Gastrocnemius medialis (tissue), 4 donors: ENCODE measurements at regions of chr16 and their contacts with region 1.

Region 1: GRCh38 chr16:69796351-69797118 is 34.4 kb downstream of the WWP2 start:
- DNase-seq: peak; percentile 13 to 18
- ATAC-seq: peak; percentile 80 to 95
- H3K4me3 ChIP-seq: peak overlapping the region in 1 of 4 donors; percentile 10
- H3K27ac ChIP-seq: no peak overlapping the region
- H3K4me1 ChIP-seq: peaks cover 0 to 4% of the 10 kb centered on the region in 2 donors
- H3K27me3 ChIP-seq: no peaks in the 10 kb centered on the region
- CTCF ChIP-seq: peak; percentile 82 to 91 (median 89)
- POLR2A ChIP-seq: no peak

Region 2: GRCh38 chr16:69848637-69849545 is 52.4 kb after region 1 on chr16:
- in situ Hi-C with region 1: loop called in 2 of 4 experiments (anchors 10 kb)
- intact Hi-C with region 1: no loop called
- DNase-seq: peak; percentile 69 to 82
- ATAC-seq: peak; percentile 97 to 98
- H3K4me3 ChIP-seq: peak overlapping the region; percentile 3 to 31 (median 16)
- H3K27ac ChIP-seq: peak overlapping the region; percentile 68 to 82 (median 76)
- H3K4me1 ChIP-seq: peaks cover 21 to 25% of the 10 kb centered on the region in 2 donors
- H3K27me3 ChIP-seq: no peaks in the 10 kb centered on the region
- CTCF ChIP-seq: no peak
- POLR2A ChIP-seq: no peak

Region 3: DNA sequence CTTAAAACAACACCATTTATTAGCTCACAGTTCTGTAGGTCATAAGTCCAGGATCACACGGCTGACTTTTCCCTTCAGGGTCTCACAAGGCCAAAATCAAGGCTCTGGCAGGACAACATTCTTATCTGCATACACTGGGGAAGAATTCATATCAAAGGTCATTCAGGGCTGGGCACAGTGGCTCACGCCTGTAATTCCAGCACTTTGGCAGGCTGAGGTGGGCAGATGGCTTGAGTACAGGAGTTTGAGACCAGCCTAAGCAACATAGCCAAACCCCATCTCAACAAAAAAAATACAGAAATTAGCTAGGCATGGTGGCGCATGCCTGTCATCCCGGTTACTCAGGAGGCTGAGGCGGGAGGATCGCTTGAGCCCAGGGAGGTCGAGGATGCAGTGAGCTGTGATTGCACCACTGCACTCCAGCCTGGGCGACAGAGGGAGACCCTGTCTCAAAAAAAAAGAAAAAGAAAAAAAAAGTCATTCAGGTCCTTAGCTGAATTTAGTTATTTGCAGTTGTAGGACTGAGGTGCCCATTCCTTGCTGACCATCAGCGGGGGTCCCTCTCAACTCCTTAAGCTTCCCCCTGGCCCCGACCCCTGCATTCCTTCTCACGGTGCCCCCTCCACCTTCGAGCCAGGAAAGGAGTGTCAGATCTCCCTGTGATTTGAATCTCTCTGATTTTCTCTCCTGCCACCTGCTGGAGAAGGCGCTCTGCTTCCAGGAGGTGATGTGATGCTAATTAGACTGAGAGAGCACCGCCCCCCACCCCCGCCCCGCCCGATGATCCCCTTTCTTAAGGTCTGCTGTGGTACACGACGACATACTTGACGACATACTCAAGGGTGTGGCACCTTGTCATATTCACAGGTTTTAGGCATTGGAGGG is 62.8 kb after region 1 on chr16:
- in situ Hi-C with region 1: loop called in 1 of 4 experiments (anchors 10 kb)
- intact Hi-C with region 1: loop called (anchors 1 kb)
- DNase-seq: peak in 1 of 2 donors; percentile 23
- ATAC-seq: peak in 1 of 2 donors; percentile 20
- H3K4me3 ChIP-seq: no peak overlapping the region
- H3K27ac ChIP-seq: peak overlapping the region; percentile 80 to 84 (median 82)
- H3K4me1 ChIP-seq: peaks cover 22 to 32% of the 10 kb centered on the region in 2 donors
- H3K27me3 ChIP-seq: no peaks in the 10 kb centered on the region
- CTCF ChIP-seq: peak in 4 of 5 experiments; percentile 20 to 57 (median 41)
- POLR2A ChIP-seq: no peak

Region 4: DNA sequence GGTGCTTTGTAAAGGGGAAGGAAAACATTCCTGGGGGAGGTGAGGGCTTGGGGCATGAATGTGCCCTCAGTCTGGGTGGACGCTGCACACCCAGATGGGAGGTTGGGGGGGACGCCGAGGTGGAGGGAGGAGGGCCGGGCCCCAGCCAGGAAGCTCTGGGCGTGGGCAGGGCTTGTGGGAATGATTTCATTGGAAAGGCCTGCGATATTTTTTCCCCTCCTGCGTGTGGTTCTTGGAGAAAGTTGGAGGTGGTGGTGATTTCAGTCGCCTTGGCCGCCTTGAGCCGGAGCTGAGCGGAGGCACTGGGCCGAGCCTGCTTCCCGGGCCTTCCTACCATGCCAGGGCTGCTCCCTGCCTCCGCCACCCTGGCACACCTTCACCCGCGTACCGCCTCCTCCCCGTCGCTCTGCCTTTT is 128.2 kb after region 1 on chr16:
- in situ Hi-C with region 1: loop called in 1 of 4 experiments (anchors 5 kb)
- intact Hi-C with region 1: no loop called
- DNase-seq: peak in 1 of 2 donors; percentile 58
- ATAC-seq: peak in 1 of 2 donors; percentile 65
- H3K4me3 ChIP-seq: peak overlapping the region; percentile 23 to 41 (median 34)
- H3K27ac ChIP-seq: peak overlapping the region; percentile 70 to 82 (median 72)
- H3K4me1 ChIP-seq: peaks cover 15 to 27% of the 10 kb centered on the region in 2 donors
- H3K27me3 ChIP-seq: no peaks in the 10 kb centered on the region
- CTCF ChIP-seq: no peak
- POLR2A ChIP-seq: peak in 1 of 2 donors; percentile 47

Region 5: DNA sequence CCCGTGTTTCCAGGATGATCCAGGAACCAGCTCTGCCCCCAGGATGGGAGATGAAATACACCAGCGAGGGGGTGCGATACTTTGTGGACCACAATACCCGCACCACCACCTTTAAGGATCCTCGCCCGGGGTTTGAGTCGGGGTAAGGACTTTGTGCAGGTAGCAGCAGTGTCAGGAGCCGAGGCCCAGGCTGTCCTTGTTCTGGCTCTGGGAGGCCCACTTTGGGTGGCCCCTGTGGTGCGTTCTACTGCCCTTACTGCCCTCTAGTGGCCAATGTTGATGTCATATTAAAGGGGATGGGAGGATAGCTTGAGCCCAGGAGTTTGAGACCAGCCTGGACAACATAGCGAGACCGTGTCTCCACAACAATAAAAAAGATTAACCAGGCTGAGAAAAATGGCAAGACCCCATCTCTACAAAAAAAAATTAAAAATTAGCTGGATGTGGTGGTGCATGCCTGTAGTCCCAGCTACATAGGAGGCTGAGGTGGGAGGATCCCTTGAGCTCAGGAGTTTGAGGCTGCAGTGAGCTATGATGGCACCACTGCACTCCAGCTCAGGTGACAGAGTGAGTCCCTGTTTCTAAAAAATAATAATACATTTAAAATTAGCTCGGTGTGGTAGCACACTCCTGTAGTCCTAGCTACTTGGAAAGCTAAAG is 133.7 kb after region 1 on chr16:
- in situ Hi-C with region 1: loop called (anchors 5 to 10 kb)
- intact Hi-C with region 1: loop called (anchors 1 kb)
- DNase-seq: no peak
- ATAC-seq: peak; percentile 53 to 77
- H3K4me3 ChIP-seq: no peak overlapping the region
- H3K27ac ChIP-seq: peak overlapping the region in 1 of 4 donors; percentile 70
- H3K4me1 ChIP-seq: peaks cover 4 to 17% of the 10 kb centered on the region in 2 donors
- H3K27me3 ChIP-seq: no peaks in the 10 kb centered on the region
- CTCF ChIP-seq: peak; percentile 67 to 78 (median 77)
- POLR2A ChIP-seq: no peak